PC-9 (cell line): ENCODE measurements at regions of chr11 and their contacts with region 1.

Region 1: GRCh38 chr11:128210148-128210940 is 377.0 kb downstream of the ETS1 start:
- DNase-seq: peak; percentile 77 to 100
- H3K4me3 ChIP-seq: peak overlapping the region; percentile 16; the same call in 1 of the 2 replicates
- H3K27ac ChIP-seq: peak overlapping the region; percentile 100
- H3K4me1 ChIP-seq: peaks cover 59% of the 10 kb centered on the region
- H3K27me3 ChIP-seq: no peaks in the 10 kb centered on the region
- CTCF ChIP-seq: no peak

Region 2: GRCh38 chr11:127601578-127601977 is 608.8 kb before region 1 on chr11:
- CTCF ChIA-PET with region 1: no interaction called
- POLR2A ChIA-PET with region 1: no interaction called
- intact Hi-C with region 1: no loop called
- DNase-seq: no peak
- H3K4me3 ChIP-seq: no peak overlapping the region
- H3K27ac ChIP-seq: no peak overlapping the region
- H3K4me1 ChIP-seq: no peaks in the 10 kb centered on the region
- H3K27me3 ChIP-seq: peaks cover 12% of the 10 kb centered on the region
- CTCF ChIP-seq: no peak

Region 3: DNA sequence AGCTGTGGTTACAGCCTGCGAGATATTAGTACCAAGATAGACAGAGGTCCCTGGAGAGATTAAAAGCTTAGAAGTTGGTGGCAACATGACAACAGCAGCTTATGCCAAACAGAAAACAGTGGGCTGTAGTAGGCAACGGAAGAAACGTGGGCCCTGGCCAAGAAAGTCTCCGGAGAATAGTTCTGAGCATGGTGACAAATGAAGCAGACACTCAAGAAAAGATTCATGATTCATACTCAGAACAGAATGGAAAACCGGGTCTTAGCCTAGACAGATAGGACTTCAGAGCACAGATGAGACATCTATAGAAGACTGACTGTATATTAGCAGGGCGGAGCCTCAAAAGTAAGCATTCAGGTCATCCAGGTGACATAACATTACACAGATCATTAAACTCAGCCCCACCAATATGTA is 350.4 kb before region 1 on chr11:
- CTCF ChIA-PET with region 1: no interaction called
- POLR2A ChIA-PET with region 1: no interaction called
- intact Hi-C with region 1: loop called (anchors 2 kb)
- DNase-seq: peak in 1 of 2 experiments; percentile 62
- H3K4me3 ChIP-seq: no peak overlapping the region
- H3K27ac ChIP-seq: no peak overlapping the region
- H3K4me1 ChIP-seq: no peaks in the 10 kb centered on the region
- H3K27me3 ChIP-seq: no peaks in the 10 kb centered on the region
- CTCF ChIP-seq: no peak

Region 4: DNA sequence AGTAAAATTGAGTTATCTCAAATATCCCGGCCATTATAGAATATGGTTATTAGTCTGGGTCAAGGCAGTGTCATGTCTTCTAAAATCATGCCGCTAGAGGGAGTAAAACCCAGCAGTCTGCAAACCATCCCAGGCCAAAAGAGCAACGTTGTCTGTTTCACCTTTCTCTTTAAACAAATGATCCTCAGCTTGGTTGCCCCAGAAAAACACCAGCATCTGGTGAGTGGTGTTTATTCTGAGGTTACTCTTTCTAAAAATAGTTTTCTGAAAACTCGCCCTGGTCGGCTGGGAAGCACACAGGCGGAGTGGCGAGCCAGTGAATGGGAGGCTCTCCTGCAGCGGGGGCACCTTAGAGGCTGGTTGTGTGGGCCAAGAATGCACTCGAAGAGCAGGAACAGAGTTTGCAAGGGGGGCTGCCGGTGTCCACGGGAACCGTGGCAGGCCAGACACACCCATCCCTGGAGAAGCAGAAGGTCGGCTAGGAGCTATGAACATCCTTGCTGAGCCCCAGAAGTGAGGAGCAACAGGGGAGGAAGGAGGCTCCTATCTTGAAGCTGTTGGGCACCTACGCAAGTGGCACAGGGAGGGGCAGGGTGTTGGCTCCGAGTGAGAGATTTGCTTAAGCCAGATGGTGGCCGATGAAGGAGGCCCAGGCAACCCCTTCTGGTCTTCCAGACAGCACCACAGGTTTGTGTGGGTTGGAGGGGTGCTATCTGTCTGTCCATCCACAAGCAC is 79.9 kb after region 1 on chr11:
- CTCF ChIA-PET with region 1: no interaction called
- POLR2A ChIA-PET with region 1: interaction called, 5 read pairs
- intact Hi-C with region 1: loop called (anchors 2 kb)
- DNase-seq: peak; percentile 45 to 58
- H3K4me3 ChIP-seq: no peak overlapping the region
- H3K27ac ChIP-seq: no peak overlapping the region
- H3K4me1 ChIP-seq: peaks cover 18% of the 10 kb centered on the region
- H3K27me3 ChIP-seq: no peaks in the 10 kb centered on the region
- CTCF ChIP-seq: peak; percentile 93

Region 5: GRCh38 chr11:128448200-128448886 is 238.0 kb after region 1 on chr11:
- CTCF ChIA-PET with region 1: no interaction called
- POLR2A ChIA-PET with region 1: no interaction called
- intact Hi-C with region 1: loop called (anchors 5 kb)
- DNase-seq: peak; percentile 81 to 98
- H3K4me3 ChIP-seq: peak overlapping the region; percentile 38; the same call in 1 of the 2 replicates
- H3K27ac ChIP-seq: peak overlapping the region; percentile 96
- H3K4me1 ChIP-seq: peaks cover 24% of the 10 kb centered on the region
- H3K27me3 ChIP-seq: no peaks in the 10 kb centered on the region
- CTCF ChIP-seq: no peak

Region 6: DNA sequence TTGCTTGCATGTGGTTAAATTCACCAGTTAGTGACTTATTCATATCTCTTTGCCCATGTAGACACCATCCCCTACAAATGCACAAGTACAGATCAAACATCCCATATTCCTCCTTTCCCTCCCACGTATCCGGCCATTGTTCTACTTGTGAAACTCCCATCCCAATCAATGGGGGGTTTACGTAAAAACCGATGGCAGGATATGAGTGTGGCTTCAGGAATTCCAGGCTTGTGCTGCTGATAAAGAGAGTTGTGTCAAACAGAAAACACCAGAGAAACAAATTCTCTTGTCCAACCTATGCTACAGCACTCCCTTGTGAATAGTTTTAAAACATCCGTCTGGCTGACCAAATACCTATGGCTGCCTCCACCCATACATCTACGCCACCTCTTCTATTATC is 499.1 kb after region 1 on chr11:
- CTCF ChIA-PET with region 1: no interaction called
- POLR2A ChIA-PET with region 1: no interaction called
- intact Hi-C with region 1: loop called (anchors 2 kb)
- DNase-seq: no peak
- H3K4me3 ChIP-seq: no peak overlapping the region
- H3K27ac ChIP-seq: no peak overlapping the region
- H3K4me1 ChIP-seq: no peaks in the 10 kb centered on the region
- H3K27me3 ChIP-seq: peaks cover 3% of the 10 kb centered on the region; the same call in 1 of the 2 replicates
- CTCF ChIP-seq: no peak